HepG2 (cell line): ENCODE measurements at regions of chr9 and their contacts with region 1.

Region 1: GRCh38 chr9:78296893-78297671 is at the start of gene PSAT1:
- DNase-seq: peak; percentile 94
- ATAC-seq: peak; percentile 94
- H3K4me3 ChIP-seq: peak within 1 kb of the TSS; percentile 88 to 95 (median 95)
- H3K27ac ChIP-seq: peak within 1 kb of the TSS; percentile 97
- H3K4me1 ChIP-seq: peaks cover 75% of the 10 kb centered on the region
- H3K27me3 ChIP-seq: no peaks in the 10 kb centered on the region; a peak in 2 of 5 replicates
- CTCF ChIP-seq: 0 out of 2 replicates have a peak, but pooled peaks have one; percentile 10
- EP300 ChIP-seq: no peak; a peak in 1 of 4 replicates
- POLR2A ChIP-seq: peak; percentile 87 to 98
- RAD21 ChIP-seq: no peak; the same call in none of the 2 replicates
- total RNA-seq, gene PSAT1: 135 and 262 TPM in 2 replicates

Region 2: GRCh38 chr9:76744336-76744735 is 1552.7 kb before region 1 on chr9:
- CTCF ChIA-PET with region 1: no interaction called
- POLR2A ChIA-PET with region 1: no interaction called
- in situ Hi-C with region 1: no loop called
- intact Hi-C with region 1: no loop called
- DNase-seq: no peak
- ATAC-seq: no peak
- H3K4me3 ChIP-seq: no peak overlapping the region
- H3K27ac ChIP-seq: no peak overlapping the region
- H3K4me1 ChIP-seq: no peaks in the 10 kb centered on the region
- H3K27me3 ChIP-seq: peaks cover 0 to 4% of the 10 kb centered on the region in 2 experiments; a peak in 1 of 5 replicates
- CTCF ChIP-seq: no peak
- EP300 ChIP-seq: no peak
- POLR2A ChIP-seq: no peak
- RAD21 ChIP-seq: no peak

Region 3: DNA sequence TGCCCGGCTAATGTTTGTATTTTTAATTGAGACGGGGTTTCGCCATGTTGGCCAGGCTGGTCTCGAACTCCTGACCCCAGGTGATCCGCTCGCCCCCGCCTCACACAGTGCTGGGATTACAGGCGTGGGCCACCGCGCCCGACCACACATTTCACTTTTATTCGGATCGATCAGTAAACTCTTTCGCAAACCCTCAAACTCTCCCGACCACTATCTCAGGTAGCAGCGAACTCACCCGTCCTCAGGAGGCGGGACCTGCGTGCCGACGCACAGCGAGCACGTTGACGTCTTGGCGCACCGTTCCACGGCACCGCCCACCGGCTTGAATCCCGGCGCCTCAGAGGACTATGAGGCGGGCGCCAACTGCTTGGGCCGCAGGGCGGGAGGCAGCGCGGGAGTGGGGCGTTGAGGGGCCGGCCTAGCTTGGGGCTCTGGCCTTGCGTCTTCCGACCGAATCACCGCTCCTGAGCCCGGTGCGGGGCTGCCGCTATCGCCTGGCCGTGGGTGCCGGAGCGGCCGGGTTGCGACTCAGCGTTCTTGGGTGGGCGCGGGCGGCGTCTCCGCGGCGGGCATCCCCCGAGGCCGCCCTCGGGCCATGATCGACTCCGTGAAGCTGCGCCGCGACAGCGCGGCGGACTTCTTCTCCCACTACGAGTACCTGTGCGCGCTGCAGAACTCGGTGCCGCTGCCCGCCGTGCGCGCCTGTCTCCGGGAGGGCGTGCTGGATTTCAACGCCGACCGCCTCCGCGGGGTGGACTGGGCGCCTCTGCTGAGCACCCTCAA is 61.1 kb before region 1 on chr9 and contains the start of gene CEP78:
- CTCF ChIA-PET with region 1: no interaction called
- POLR2A ChIA-PET with region 1: interaction called, 14 read pairs
- in situ Hi-C with region 1: no loop called
- intact Hi-C with region 1: loop called (anchors 2 kb)
- DNase-seq: peak; percentile 89
- ATAC-seq: peak; percentile 96
- H3K4me3 ChIP-seq: peak within 1 kb of the TSS; percentile 80 to 96 (median 87)
- H3K27ac ChIP-seq: peak within 1 kb of the TSS; percentile 80
- H3K4me1 ChIP-seq: peaks cover 49% of the 10 kb centered on the region
- H3K27me3 ChIP-seq: no peaks in the 10 kb centered on the region
- CTCF ChIP-seq: no peak
- EP300 ChIP-seq: no peak
- POLR2A ChIP-seq: peak in 1 of 2 experiments; percentile 75
- RAD21 ChIP-seq: no peak
- total RNA-seq, gene CEP78: 30.8 and 38.3 TPM in 2 replicates

Region 4: GRCh38 chr9:78261403-78262001 is 35.6 kb before region 1 on chr9:
- CTCF ChIA-PET with region 1: interaction called, 5 read pairs
- POLR2A ChIA-PET with region 1: interaction called, 9 read pairs
- in situ Hi-C with region 1: no loop called
- intact Hi-C with region 1: loop called (anchors 1 kb)
- DNase-seq: peak; percentile 23
- ATAC-seq: no peak
- H3K4me3 ChIP-seq: no peak overlapping the region
- H3K27ac ChIP-seq: no peak overlapping the region
- H3K4me1 ChIP-seq: no peaks in the 10 kb centered on the region
- H3K27me3 ChIP-seq: no peaks in the 10 kb centered on the region
- CTCF ChIP-seq: peak; percentile 66
- EP300 ChIP-seq: no peak
- POLR2A ChIP-seq: no peak
- RAD21 ChIP-seq: peak; percentile 20; the same call in 1 of the 2 replicates

Region 5: GRCh38 chr9:78272307-78272706 is 24.8 kb before region 1 on chr9:
- CTCF ChIA-PET with region 1: no interaction called
- POLR2A ChIA-PET with region 1: interaction called, 114 read pairs
- in situ Hi-C with region 1: no loop called
- intact Hi-C with region 1: no loop called
- DNase-seq: no peak
- ATAC-seq: no peak
- H3K4me3 ChIP-seq: no peak overlapping the region
- H3K27ac ChIP-seq: no peak overlapping the region
- H3K4me1 ChIP-seq: peaks cover 1% of the 10 kb centered on the region
- H3K27me3 ChIP-seq: no peaks in the 10 kb centered on the region
- CTCF ChIP-seq: no peak
- EP300 ChIP-seq: no peak
- POLR2A ChIP-seq: no peak
- RAD21 ChIP-seq: no peak

Region 6: DNA sequence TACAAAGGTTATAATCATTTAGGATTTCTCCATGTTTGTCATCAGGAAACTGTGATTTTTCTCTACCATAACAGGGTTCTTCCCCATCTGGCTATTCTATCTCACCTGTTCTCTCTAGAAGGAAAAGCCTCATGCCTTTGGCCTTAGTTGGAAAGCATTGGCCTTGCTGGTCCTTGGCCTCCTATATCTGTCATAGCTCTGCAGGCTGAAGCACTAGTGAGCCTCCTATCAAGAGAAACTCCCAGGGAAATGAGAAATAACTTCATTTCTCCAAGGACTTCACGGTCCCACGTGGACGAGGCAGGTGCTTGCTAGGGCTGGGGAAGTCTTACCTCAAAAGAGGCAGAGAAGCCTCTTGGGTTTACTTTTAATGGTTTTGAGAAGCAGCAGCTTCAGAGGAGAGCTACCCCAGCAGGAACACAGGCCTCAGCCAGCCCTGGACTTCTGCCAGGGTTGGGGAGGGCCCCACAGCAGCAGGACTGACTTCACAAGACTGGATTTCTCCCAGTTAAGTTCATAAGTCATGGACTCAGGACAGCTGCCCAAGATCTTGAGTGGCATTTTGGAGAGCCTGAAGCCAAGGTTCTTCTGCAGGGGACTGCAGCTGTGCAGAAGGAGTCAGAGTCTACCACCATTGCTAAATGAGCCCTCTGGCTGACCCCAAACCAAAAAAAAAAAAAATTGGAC is 16.0 kb before region 1 on chr9:
- CTCF ChIA-PET with region 1: interaction called, 3 read pairs
- POLR2A ChIA-PET with region 1: interaction called, 114 read pairs
- in situ Hi-C with region 1: no loop called
- intact Hi-C with region 1: loop called (anchors 2 kb)
- DNase-seq: peak; percentile 35
- ATAC-seq: peak; percentile 81
- H3K4me3 ChIP-seq: no peak overlapping the region
- H3K27ac ChIP-seq: peak overlapping the region; percentile 51
- H3K4me1 ChIP-seq: peaks cover 50% of the 10 kb centered on the region
- H3K27me3 ChIP-seq: no peaks in the 10 kb centered on the region
- CTCF ChIP-seq: no peak
- EP300 ChIP-seq: no peak
- POLR2A ChIP-seq: no peak
- RAD21 ChIP-seq: no peak

Region 7: DNA sequence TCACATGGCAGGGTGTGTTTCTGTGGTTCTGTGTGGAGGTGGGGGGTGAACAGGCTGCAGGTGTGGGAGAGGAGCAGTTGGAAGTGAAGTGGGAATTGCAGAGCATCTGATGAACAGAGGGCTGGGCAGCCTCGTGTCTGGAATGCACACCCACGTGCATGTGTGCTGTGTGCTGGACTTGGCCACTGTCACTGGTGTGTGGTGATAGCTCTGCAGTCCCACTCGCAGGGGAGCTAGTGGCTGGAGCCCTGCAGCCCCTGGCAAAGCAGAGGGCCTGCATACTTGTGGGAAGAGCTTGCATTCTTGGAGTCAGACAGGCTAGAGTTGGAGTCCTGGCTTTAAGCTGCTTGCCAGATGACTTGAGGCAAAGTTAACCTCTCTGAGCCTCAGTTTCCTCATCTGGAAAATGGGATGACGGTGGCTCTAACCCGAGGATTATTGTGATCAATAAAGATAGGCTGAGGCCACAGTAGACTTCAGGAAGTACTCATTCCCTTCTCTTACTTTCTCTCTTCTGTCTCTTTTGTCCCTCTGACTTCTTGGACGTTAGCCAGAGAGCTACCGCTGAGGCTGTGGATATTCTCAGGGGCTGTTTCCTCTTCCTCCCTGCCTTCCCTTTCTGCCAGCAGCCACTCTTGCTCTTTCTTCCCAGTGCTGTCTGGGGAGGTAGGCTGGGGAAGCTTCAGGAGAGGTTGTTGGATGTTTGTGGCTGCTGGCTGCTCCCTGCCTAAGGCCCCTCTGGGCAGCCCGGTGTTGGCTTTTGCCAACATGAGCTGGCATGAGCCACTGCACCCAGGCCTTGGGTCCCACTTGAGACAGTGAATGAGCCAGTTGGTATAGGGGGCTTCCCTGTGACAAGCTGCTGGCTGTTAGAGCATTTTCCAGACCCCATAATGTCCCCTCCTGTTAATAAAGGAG is 18.1 kb after region 1 on chr9:
- CTCF ChIA-PET with region 1: no interaction called
- POLR2A ChIA-PET with region 1: interaction called, 76 read pairs
- in situ Hi-C with region 1: no loop called
- intact Hi-C with region 1: loop called (anchors 2 kb)
- DNase-seq: no peak
- ATAC-seq: peak; percentile 13
- H3K4me3 ChIP-seq: no peak overlapping the region
- H3K27ac ChIP-seq: no peak overlapping the region
- H3K4me1 ChIP-seq: no peaks in the 10 kb centered on the region; the same call in 1 of the 2 replicates
- H3K27me3 ChIP-seq: no peaks in the 10 kb centered on the region
- CTCF ChIP-seq: no peak
- EP300 ChIP-seq: no peak
- POLR2A ChIP-seq: no peak; a peak in 1 of 4 replicates
- RAD21 ChIP-seq: no peak

Region 8: GRCh38 chr9:78325343-78325742 is 28.3 kb after region 1 on chr9:
- CTCF ChIA-PET with region 1: no interaction called
- POLR2A ChIA-PET with region 1: interaction called, 10 read pairs
- in situ Hi-C with region 1: no loop called
- intact Hi-C with region 1: no loop called
- DNase-seq: no peak
- ATAC-seq: no peak; the same call in 2 of the 3 replicates
- H3K4me3 ChIP-seq: no peak overlapping the region
- H3K27ac ChIP-seq: no peak overlapping the region
- H3K4me1 ChIP-seq: peaks cover 7% of the 10 kb centered on the region
- H3K27me3 ChIP-seq: no peaks in the 10 kb centered on the region
- CTCF ChIP-seq: no peak
- EP300 ChIP-seq: no peak
- POLR2A ChIP-seq: no peak
- RAD21 ChIP-seq: no peak